WTC11 (cell line): ENCODE measurements at regions of chr15 and their contacts with region 1.

Region 1: DNA sequence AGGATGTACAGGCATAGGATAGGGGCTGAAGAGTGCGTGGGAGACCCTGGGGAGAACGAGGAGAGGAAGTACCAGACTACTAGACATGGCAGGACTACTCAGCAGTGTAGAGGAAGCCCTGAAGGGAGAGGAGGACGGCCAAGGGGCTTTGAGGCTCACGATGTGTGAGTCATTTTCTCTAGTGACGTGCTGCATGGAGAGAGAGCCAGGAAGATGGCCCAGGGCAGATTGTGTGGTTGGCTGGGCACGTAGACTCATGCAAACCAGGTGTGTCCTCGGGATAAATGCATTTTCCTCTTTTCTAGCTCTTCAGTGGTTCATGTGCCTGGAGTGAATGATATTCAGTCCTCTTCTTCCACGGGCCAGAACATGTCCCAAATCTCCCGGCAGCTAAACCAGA is 115.0 kb upstream of the ABHD17C start:
- DNase-seq: no peak
- ATAC-seq: no peak
- H3K4me3 Mint-ChIP-seq: no peak overlapping the region
- H3K27ac Mint-ChIP-seq: no peak overlapping the region
- H3K4me1 Mint-ChIP-seq: no peaks in the 10 kb centered on the region
- H3K27me3 Mint-ChIP-seq: no peaks in the 10 kb centered on the region
- CTCF ChIP-seq: no peak

Region 2: GRCh38 chr15:80567721-80568157 is 12.4 kb before region 1 on chr15:
- CTCF ChIA-PET with region 1: interaction called, 22 read pairs
- POLR2A ChIA-PET with region 1: no interaction called
- DNase-seq: peak; percentile 52
- ATAC-seq: peak; percentile 90
- H3K4me3 Mint-ChIP-seq: no peak overlapping the region
- H3K27ac Mint-ChIP-seq: no peak overlapping the region
- H3K4me1 Mint-ChIP-seq: peaks cover 22% of the 10 kb centered on the region
- H3K27me3 Mint-ChIP-seq: no peaks in the 10 kb centered on the region; the same call in 1 of the 2 replicates
- CTCF ChIP-seq: no peak; the same call in 1 of the 2 replicates

Region 3: DNA sequence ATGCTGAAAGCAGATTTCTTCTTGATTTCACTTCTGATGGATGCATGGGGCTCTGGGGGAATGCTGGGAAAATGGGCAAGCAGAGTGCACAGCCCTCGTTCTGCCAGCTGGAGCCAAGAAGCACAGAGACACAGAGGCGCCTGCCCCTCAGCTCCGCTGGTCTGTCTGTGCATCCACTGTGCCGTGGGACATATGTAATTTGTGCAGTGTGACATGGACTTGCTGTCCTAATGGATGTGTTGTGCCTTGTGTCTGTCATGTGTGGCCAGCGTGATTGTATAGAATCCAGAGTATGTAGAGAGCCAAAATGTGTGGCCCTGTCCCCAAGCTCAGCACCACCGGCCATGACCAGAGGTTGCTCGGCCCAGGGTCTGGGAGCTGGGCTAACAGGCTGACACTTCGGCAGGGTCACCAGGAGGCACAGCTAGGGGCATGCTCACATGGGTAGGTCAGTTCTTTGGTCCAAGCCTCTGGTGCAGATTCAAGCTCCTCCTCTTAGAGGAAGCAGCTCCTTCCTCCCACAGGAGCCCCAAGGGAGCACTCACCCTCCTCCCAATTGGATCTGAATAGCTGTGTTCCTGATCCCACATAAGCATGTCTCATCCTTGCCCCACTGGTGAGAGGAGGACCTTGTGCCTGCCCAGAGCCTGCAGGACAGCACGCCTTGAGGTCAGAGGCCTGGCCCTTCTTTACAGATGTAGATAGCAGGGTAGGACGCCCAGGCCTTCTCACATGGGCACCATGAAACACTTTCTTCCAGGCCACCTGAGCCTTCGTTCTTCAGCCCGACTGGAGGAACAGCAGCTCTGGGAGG is 14.2 kb after region 1 on chr15:
- CTCF ChIA-PET with region 1: no interaction called
- POLR2A ChIA-PET with region 1: no interaction called
- DNase-seq: no peak
- ATAC-seq: no peak
- H3K4me3 Mint-ChIP-seq: no peak overlapping the region
- H3K27ac Mint-ChIP-seq: no peak overlapping the region
- H3K4me1 Mint-ChIP-seq: no peaks in the 10 kb centered on the region; the same call in 1 of the 2 replicates
- H3K27me3 Mint-ChIP-seq: no peaks in the 10 kb centered on the region; the same call in 1 of the 2 replicates
- CTCF ChIP-seq: no peak